ENCODE measurements at regions of chr22 and their contacts with region 1.

Region 1: GRCh38 chr22:38733329-38733723 is 22.5 kb downstream of the SUN2 start:
- DNase-seq: peak; percentile 59
- H3K4me3 Mint-ChIP-seq: peak overlapping the region; percentile 27
- H3K27ac Mint-ChIP-seq: peak overlapping the region; percentile 68
- H3K4me1 Mint-ChIP-seq: peaks cover 48% of the 10 kb centered on the region
- H3K27me3 Mint-ChIP-seq: no peaks in the 10 kb centered on the region

Region 2: GRCh38 chr22:38700270-38700788 is 33.0 kb before region 1 on chr22:
- CTCF ChIA-PET with region 1: interaction called, 14 read pairs
- POLR2A ChIA-PET with region 1: interaction called, 86 read pairs
- DNase-seq: no peak
- H3K4me3 Mint-ChIP-seq: peak overlapping the region; percentile 96
- H3K27ac Mint-ChIP-seq: peak overlapping the region; percentile 99
- H3K4me1 Mint-ChIP-seq: peaks cover 62% of the 10 kb centered on the region
- H3K27me3 Mint-ChIP-seq: no peaks in the 10 kb centered on the region

Region 3: GRCh38 chr22:38705235-38706100 is 27.9 kb before region 1 on chr22 and contains the start of gene GTPBP1:
- CTCF ChIA-PET with region 1: interaction called, 14 read pairs
- POLR2A ChIA-PET with region 1: interaction called, 86 read pairs
- DNase-seq: peak; percentile 98
- H3K4me3 Mint-ChIP-seq: peak within 1 kb of the TSS; percentile 85
- H3K27ac Mint-ChIP-seq: peak within 1 kb of the TSS; percentile 95
- H3K4me1 Mint-ChIP-seq: peaks cover 51% of the 10 kb centered on the region
- H3K27me3 Mint-ChIP-seq: no peaks in the 10 kb centered on the region
- total RNA-seq, gene GTPBP1: 111 to 114 TPM

Region 4: GRCh38 chr22:38718414-38718813 is 14.9 kb before region 1 on chr22:
- CTCF ChIA-PET with region 1: interaction called, 7 read pairs
- POLR2A ChIA-PET with region 1: interaction called, 67 read pairs
- DNase-seq: no peak
- H3K4me3 Mint-ChIP-seq: no peak overlapping the region
- H3K27ac Mint-ChIP-seq: no peak overlapping the region
- H3K4me1 Mint-ChIP-seq: peaks cover 19% of the 10 kb centered on the region
- H3K27me3 Mint-ChIP-seq: no peaks in the 10 kb centered on the region

Region 5: GRCh38 chr22:38744981-38745380 is 11.7 kb after region 1 on chr22:
- CTCF ChIA-PET with region 1: interaction called, 4 read pairs
- POLR2A ChIA-PET with region 1: interaction called, 479 read pairs
- DNase-seq: no peak
- H3K4me3 Mint-ChIP-seq: no peak overlapping the region
- H3K27ac Mint-ChIP-seq: peak overlapping the region; percentile 49
- H3K4me1 Mint-ChIP-seq: peaks cover 42% of the 10 kb centered on the region
- H3K27me3 Mint-ChIP-seq: no peaks in the 10 kb centered on the region

Region 6: GRCh38 chr22:38755911-38756532 is 22.7 kb after region 1 on chr22 and contains the start of gene SUN2:
- CTCF ChIA-PET with region 1: interaction called, 7 read pairs
- POLR2A ChIA-PET with region 1: interaction called, 479 read pairs
- DNase-seq: peak; percentile 95
- H3K4me3 Mint-ChIP-seq: peak within 1 kb of the TSS; percentile 95
- H3K27ac Mint-ChIP-seq: peak within 1 kb of the TSS; percentile 100
- H3K4me1 Mint-ChIP-seq: peaks cover 53% of the 10 kb centered on the region
- H3K27me3 Mint-ChIP-seq: no peaks in the 10 kb centered on the region
- total RNA-seq, gene SUN2: 498 to 500 TPM

Region 7: DNA sequence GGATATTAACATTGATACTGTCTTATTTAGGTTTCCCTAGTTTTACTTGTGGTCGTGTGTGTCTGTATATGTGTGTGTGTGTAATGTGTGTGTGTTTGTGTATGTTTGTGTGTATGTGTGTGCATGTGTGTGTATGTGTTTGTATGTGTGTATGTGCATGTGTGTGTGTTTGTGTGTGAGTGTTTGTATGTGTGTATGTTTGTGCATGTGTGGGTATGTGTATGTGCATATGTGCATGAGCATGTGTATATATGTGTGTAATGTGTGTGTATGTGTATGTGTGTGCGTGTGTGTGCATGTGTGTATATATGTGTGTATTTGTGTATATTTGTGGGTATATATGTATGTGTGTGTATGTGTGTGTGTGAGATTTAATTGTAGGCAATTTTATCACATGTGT is 77.9 kb after region 1 on chr22:
- CTCF ChIA-PET with region 1: no interaction called
- POLR2A ChIA-PET with region 1: no interaction called
- DNase-seq: no peak
- H3K4me3 Mint-ChIP-seq: no peak overlapping the region
- H3K27ac Mint-ChIP-seq: no peak overlapping the region
- H3K4me1 Mint-ChIP-seq: no peaks in the 10 kb centered on the region
- H3K27me3 Mint-ChIP-seq: peaks cover 20% of the 10 kb centered on the region